GM12878 (cell line): ENCODE measurements at regions of chr17 and their contacts with region 1.

Region 1: GRCh38 chr17:40909351-40909750 is 24.3 kb upstream of the KRT20 start:
- DNase-seq: no peak
- ATAC-seq: peak; percentile 84
- H3K4me3 ChIP-seq: no peak overlapping the region
- H3K27ac ChIP-seq: no peak overlapping the region
- H3K4me1 ChIP-seq: 0 out of 2 replicates have a peak, but pooled peaks cover 2% of the 10 kb centered on the region
- H3K27me3 ChIP-seq: peaks cover 0 to 4% of the 10 kb centered on the region in 2 experiments; a peak in 1 of 4 replicates
- CTCF ChIP-seq: peak; percentile 56 to 72 (median 68)
- EP300 ChIP-seq: no peak
- POLR2A ChIP-seq: no peak
- RAD21 ChIP-seq: peak; percentile 79

Region 2: DNA sequence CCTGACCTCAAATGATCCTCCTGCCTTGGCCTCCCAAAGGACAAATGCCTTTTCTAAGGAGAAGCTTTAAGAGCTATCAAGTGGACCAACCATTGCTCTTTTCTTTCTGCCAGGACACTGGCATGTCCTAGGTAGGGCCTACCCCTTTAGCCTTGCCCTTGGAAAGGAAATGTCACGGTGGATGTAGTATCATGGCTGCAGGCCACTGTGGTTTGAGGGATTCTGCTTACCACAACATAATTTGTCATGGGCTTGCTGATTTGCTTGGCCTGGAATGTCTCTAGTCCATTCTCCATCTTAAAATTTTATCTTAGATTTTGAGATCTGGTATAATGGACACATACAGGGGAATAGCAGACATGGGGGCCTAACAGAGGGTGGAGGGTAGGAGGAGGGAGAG is 30.3 kb before region 1 on chr17:
- CTCF ChIA-PET with region 1: no interaction called
- POLR2A ChIA-PET with region 1: no interaction called
- RAD21 ChIA-PET with region 1: no interaction called
- SMC1A ChIA-PET with region 1: no interaction called
- in situ Hi-C with region 1: no loop called
- intact Hi-C with region 1: no loop called
- DNase-seq: no peak
- ATAC-seq: no peak
- H3K4me3 ChIP-seq: no peak overlapping the region
- H3K27ac ChIP-seq: no peak overlapping the region
- H3K4me1 ChIP-seq: no peaks in the 10 kb centered on the region
- H3K27me3 ChIP-seq: no peaks in the 10 kb centered on the region; a peak in 1 of 4 replicates
- CTCF ChIP-seq: no peak
- EP300 ChIP-seq: no peak
- POLR2A ChIP-seq: no peak
- RAD21 ChIP-seq: no peak

Region 3: DNA sequence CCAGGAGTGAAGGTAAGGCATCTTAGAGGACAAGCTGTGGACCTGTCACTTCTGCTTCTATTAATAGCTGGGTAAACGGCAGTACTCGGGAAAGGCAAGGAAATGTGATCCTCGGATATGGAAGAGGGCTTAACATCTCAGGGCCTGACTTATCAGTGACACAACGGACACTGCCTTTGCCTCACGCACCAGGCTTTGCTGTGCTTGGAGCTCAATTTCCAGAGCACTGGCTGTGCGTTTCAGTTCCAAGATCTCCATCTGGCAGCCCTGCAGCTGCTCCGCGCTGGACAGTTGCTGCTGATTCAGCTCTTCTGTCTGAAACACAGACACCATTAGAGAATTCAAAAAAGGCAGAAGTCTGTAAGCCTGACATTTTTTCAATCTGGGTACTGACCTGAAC is 71.2 kb after region 1 on chr17:
- CTCF ChIA-PET with region 1: no interaction called
- POLR2A ChIA-PET with region 1: no interaction called
- RAD21 ChIA-PET with region 1: no interaction called
- SMC1A ChIA-PET with region 1: no interaction called
- in situ Hi-C with region 1: no loop called
- intact Hi-C with region 1: no loop called
- DNase-seq: no peak
- ATAC-seq: no peak
- H3K4me3 ChIP-seq: no peak overlapping the region
- H3K27ac ChIP-seq: no peak overlapping the region
- H3K4me1 ChIP-seq: no peaks in the 10 kb centered on the region
- H3K27me3 ChIP-seq: peaks cover 0 to 5% of the 10 kb centered on the region in 2 experiments; a peak in 2 of 4 replicates
- CTCF ChIP-seq: no peak
- EP300 ChIP-seq: no peak
- POLR2A ChIP-seq: no peak
- RAD21 ChIP-seq: no peak

Region 4: GRCh38 chr17:41008805-41009204 is 99.5 kb after region 1 on chr17 and contains the start of gene KRTAP3-1:
- CTCF ChIA-PET with region 1: no interaction called
- POLR2A ChIA-PET with region 1: no interaction called
- RAD21 ChIA-PET with region 1: no interaction called
- SMC1A ChIA-PET with region 1: no interaction called
- in situ Hi-C with region 1: no loop called
- intact Hi-C with region 1: no loop called
- DNase-seq: no peak
- ATAC-seq: no peak
- H3K4me3 ChIP-seq: no peak within 1 kb of the TSS
- H3K27ac ChIP-seq: no peak within 1 kb of the TSS
- H3K4me1 ChIP-seq: no peaks in the 10 kb centered on the region
- H3K27me3 ChIP-seq: peaks cover 0 to 3% of the 10 kb centered on the region in 2 experiments; a peak in 2 of 4 replicates
- CTCF ChIP-seq: no peak
- EP300 ChIP-seq: no peak
- POLR2A ChIP-seq: no peak
- RAD21 ChIP-seq: no peak
- polyA plus RNA-seq, gene KRTAP3-1: not detected

Region 5: DNA sequence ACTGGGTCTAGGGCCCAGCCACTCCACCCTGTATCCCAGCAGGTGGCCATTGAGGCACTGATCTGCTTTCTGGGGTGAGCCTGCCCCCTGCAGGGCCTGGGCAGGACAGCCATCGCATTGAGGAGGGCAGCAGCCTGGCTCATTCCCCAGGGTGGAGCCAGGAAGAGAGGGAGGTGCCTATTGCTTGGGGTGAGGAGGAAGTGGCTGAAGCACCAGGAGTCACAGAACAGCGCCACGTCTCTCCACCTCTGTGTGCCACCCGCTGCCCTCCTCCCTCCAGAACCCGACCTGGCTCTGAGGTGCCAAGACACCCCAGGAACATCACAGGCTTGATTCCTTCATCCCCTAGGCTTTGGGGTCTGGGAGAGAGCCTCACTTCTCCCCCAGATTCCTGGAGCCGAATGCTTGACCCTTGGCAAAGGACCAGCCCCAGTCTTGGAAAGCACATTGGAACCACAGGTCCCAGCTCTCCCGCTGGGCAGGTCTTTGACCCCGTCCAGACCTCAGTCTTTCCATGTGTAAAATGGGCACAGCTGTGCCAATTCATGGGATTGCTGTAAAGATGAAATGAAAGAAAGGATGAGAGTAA is 587.6 kb after region 1 on chr17:
- CTCF ChIA-PET with region 1: no interaction called
- POLR2A ChIA-PET with region 1: no interaction called
- RAD21 ChIA-PET with region 1: no interaction called
- SMC1A ChIA-PET with region 1: interaction called, 4 read pairs
- in situ Hi-C with region 1: no loop called
- intact Hi-C with region 1: loop called (anchors 5 kb)
- DNase-seq: peak; percentile 12
- ATAC-seq: peak; percentile 99
- H3K4me3 ChIP-seq: no peak overlapping the region
- H3K27ac ChIP-seq: no peak overlapping the region
- H3K4me1 ChIP-seq: no peaks in the 10 kb centered on the region
- H3K27me3 ChIP-seq: peaks cover 0 to 2% of the 10 kb centered on the region in 2 experiments; a peak in 2 of 4 replicates
- CTCF ChIP-seq: peak; percentile 42 to 51 (median 51)
- EP300 ChIP-seq: no peak
- POLR2A ChIP-seq: no peak
- RAD21 ChIP-seq: peak; percentile 47